Heart left ventricle (tissue), 16 donors: ENCODE measurements at regions of chr13 and their contacts with region 1.

Region 1: GRCh38 chr13:35449821-35450220 is 26.7 kb downstream of the MAB21L1 start:
- DNase-seq: no peak
- ATAC-seq: no peak
- H3K4me3 ChIP-seq: no peak overlapping the region
- H3K27ac ChIP-seq: no peak overlapping the region
- H3K4me1 ChIP-seq: no peaks in the 10 kb centered on the region
- H3K27me3 ChIP-seq: no peaks in the 10 kb centered on the region
- CTCF ChIP-seq: no peak
- POLR2A ChIP-seq: no peak

Region 2: GRCh38 chr13:35309706-35310105 is 140.1 kb before region 1 on chr13:
- intact Hi-C with region 1: no loop called
- DNase-seq: no peak
- ATAC-seq: no peak
- H3K4me3 ChIP-seq: no peak overlapping the region
- H3K27ac ChIP-seq: no peak overlapping the region
- H3K4me1 ChIP-seq: no peaks in the 10 kb centered on the region
- H3K27me3 ChIP-seq: no peaks in the 10 kb centered on the region
- CTCF ChIP-seq: no peak
- POLR2A ChIP-seq: no peak

Region 3: DNA sequence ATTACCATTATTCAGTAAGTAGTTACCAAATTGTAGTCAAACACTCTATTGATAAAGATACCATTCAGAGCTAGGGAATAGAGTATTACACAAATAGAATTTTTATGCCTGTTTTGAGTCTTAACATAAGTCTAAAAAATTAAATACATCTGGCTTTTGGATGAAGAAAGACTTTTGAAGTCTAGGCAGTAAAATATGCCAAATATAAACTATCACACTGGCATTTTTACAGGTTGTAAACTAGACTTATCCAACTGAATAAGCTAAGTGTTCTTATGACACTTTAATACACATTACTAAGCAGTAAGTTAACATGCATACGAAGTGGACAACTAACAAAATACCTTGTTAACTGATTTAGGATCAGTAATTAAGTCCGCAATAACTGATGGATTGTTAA is 82.2 kb before region 1 on chr13:
- intact Hi-C with region 1: loop called in 1 of 10 experiments (anchors 10 kb)
- DNase-seq: no peak
- ATAC-seq: no peak
- H3K4me3 ChIP-seq: no peak overlapping the region
- H3K27ac ChIP-seq: no peak overlapping the region
- H3K4me1 ChIP-seq: no peaks in the 10 kb centered on the region
- H3K27me3 ChIP-seq: no peaks in the 10 kb centered on the region
- CTCF ChIP-seq: no peak
- POLR2A ChIP-seq: no peak

Region 4: DNA sequence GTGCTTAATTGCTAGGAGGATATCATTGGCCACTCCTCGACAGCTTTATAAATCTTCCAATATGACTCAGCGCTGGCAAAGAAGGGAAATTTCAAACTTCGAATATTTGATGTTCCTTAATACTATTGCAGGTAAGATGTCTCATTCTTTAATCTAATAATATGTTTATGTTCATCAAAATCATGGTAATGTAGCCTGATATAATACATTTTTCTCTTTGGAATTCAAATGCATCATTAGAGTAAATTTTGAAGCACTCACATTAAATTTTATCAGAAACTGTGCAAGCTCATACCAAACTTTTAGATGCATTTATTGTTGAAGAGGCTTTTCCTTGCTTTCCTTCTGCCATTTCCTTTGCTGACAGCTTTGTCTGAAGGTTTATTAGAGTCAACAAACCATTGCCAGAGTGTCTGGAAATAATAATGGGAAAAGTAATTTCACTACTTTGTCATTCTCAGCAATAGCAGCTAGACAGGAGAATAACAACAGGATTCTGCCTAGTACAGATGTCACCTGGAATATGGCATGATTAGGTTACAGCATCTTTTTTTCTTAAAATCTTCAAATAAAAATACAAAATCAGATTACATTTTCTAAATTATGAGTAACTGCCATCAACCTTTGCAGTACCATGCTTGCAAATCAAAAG is 105.3 kb after region 1 on chr13:
- intact Hi-C with region 1: no loop called
- DNase-seq: no peak
- ATAC-seq: no peak
- H3K4me3 ChIP-seq: no peak overlapping the region
- H3K27ac ChIP-seq: no peak overlapping the region
- H3K4me1 ChIP-seq: no peaks in the 10 kb centered on the region
- H3K27me3 ChIP-seq: no peaks in the 10 kb centered on the region
- CTCF ChIP-seq: no peak
- POLR2A ChIP-seq: no peak